ENCODE measurements at regions of chr19 and their contacts with region 1.

Region 1: DNA sequence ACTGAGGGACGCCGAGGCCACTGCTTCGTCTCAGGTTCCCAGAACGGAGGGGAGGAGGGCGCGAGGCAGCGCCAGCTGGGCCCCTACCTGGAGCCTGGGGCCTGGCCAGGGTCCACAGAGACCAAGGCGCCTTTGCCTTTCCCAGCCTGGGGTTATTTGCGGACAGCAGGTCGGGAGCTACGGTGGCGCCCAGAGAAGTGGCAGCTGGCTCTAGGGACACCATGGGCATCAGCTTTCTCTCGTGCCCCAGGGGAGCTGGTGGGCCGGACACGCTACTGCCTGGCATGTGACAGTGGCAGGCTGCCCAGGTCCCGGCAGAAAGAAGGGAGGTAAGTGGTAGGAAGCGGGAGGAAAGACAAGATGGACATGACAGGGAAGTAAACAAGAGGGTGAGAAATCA is 19.0 kb downstream of the AKT2 start:
- DNase-seq: peak; percentile 93 to 99
- ATAC-seq: peak; percentile 73 to 79
- H3K4me3 ChIP-seq: peak overlapping the region; percentile 41 to 61 (median 44)
- H3K27ac ChIP-seq: peak overlapping the region; percentile 93 to 98 (median 96)
- H3K4me1 ChIP-seq: peaks cover 73 to 76% of the 10 kb centered on the region in 2 donors
- H3K27me3 ChIP-seq: no peaks in the 10 kb centered on the region
- CTCF ChIP-seq: no peak
- POLR2A ChIP-seq: peak; percentile 36 to 67

Region 2: DNA sequence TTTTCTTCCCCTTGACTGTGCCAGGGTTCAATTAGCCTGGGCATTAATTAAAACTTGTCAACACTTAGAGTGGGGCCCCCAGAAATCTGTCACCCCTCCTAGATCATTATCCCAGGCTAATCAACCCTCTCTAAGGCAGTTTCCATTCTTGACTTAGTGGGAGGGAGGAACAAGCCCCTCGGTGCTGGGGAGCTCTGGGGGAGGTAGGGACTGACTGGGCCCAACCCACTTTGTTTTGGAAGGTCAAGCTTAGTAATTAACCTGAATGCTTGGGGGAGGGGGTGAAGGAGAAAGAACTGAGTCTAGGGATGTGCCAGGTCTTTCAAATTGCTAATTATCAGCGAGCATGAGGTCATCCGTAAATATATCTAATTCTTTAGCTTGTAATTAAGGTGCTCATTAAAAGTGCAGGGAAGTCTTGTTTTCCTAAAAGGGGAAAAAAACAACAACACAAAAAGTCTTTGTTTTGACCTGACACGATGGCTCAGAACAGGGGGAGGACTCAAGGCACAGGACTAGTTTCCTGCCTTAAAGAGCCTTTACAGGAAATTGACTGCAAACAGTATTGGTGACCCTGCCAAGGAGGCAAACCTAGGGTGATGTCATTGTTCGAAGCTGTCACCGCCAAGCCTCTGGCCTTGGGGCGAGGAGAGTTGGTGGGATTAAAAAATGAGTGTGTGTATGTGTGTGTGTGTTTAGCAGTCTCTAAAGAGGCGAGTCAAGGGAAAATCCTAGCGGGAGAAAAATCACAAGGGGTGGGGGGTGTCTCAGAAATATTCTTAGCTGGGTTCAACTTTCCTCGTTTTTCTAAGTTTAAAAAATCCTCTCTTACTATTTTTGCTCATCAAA is 1599.2 kb before region 1 on chr19:
- in situ Hi-C with region 1: no loop called
- intact Hi-C with region 1: loop called (anchors 10 kb)
- DNase-seq: no peak
- ATAC-seq: no peak
- H3K4me3 ChIP-seq: no peak overlapping the region
- H3K27ac ChIP-seq: peak overlapping the region; percentile 98 to 100 (median 99)
- H3K4me1 ChIP-seq: peaks cover 99 to 100% of the 10 kb centered on the region in 2 donors
- H3K27me3 ChIP-seq: no peaks in the 10 kb centered on the region
- CTCF ChIP-seq: no peak
- POLR2A ChIP-seq: no peak

Region 3: GRCh38 chr19:39970675-39971379 is 295.3 kb before region 1 on chr19 and contains the start of gene PSMC4:
- in situ Hi-C with region 1: no loop called
- intact Hi-C with region 1: no loop called
- DNase-seq: peak; percentile 97 to 98
- ATAC-seq: peak; percentile 98 to 99
- H3K4me3 ChIP-seq: peak within 1 kb of the TSS; percentile 86 to 98 (median 94)
- H3K27ac ChIP-seq: peak within 1 kb of the TSS; percentile 97 to 99 (median 99)
- H3K4me1 ChIP-seq: peaks cover 21 to 23% of the 10 kb centered on the region in 2 donors
- H3K27me3 ChIP-seq: no peaks in the 10 kb centered on the region
- CTCF ChIP-seq: peak; percentile 24 to 81 (median 71)
- POLR2A ChIP-seq: peak; percentile 92 to 97
- total RNA-seq, gene PSMC4: 165 to 238 (median 219) TPM